Head of caudate nucleus (tissue), 42 donors: ENCODE measurements at regions of chr1 and their contacts with region 1.

Region 1: GRCh38 chr1:167533851-167534300 is 15.5 kb upstream of the CD247 start:
- DNase-seq: peak; percentile 35 to 92 (median 77)

Region 2: GRCh38 chr1:167066333-167067122 is 467.3 kb before region 1 on chr1:
- intact Hi-C with region 1: loop called (anchors 5 kb)
- DNase-seq: peak; percentile 67 to 94 (median 87)

Region 3: DNA sequence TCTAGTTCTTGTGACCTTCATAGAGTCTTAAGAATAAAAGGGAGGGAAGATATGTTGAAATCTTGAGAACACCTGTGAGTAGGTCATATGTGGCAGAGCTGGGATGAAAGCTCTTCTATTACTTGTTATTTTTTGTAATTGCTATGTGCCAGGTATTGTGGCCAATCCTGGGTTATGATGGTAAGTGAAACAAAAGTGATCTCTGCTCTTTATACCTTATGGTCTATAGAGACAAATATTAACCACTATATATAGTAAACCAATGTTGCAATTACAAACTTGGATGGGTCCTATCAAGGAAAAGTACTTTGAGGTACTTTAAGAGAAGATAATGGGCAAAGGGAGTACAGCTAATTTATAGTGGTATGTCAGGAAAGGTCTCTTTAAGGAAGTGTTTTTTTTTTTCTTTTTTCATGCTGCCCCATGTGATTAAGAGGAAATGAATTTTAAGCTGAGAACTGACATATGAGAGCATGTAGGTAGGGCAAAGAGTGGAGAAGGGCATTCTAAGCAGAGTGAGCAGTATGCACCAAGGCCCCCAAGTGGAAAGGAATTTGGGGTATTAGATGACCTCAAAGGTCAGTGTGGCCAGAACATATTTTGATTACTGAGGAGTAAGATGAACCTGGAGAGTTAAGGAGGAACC is 269.9 kb before region 1 on chr1:
- intact Hi-C with region 1: loop called (anchors 10 kb)
- DNase-seq: no peak